ENCODE measurements at regions of chr10 and their contacts with region 1.

Region 1: GRCh38 chr10:75111367-75111906 is at the start of gene SAMD8:
- DNase-seq: peak in 1 of 2 donors; percentile 96
- H3K4me3 ChIP-seq: peak within 1 kb of the TSS; percentile 60 to 98
- H3K27ac ChIP-seq: peak within 1 kb of the TSS; percentile 99
- H3K4me1 ChIP-seq: peaks cover 47% of the 10 kb centered on the region
- H3K27me3 ChIP-seq: no peaks in the 10 kb centered on the region
- CTCF ChIP-seq: peak in 2 of 3 experiments; percentile 38 to 55
- POLR2A ChIP-seq: peak in 1 of 2 donors; percentile 92
- total RNA-seq, gene SAMD8: 42.7 TPM

Region 2: GRCh38 chr10:75127471-75127870 is 16.0 kb after region 1 on chr10:
- intact Hi-C with region 1: no loop called
- DNase-seq: no peak
- H3K4me3 ChIP-seq: no peak overlapping the region
- H3K27ac ChIP-seq: no peak overlapping the region
- H3K4me1 ChIP-seq: peaks cover 58% of the 10 kb centered on the region
- H3K27me3 ChIP-seq: no peaks in the 10 kb centered on the region
- CTCF ChIP-seq: no peak
- POLR2A ChIP-seq: no peak

Region 3: DNA sequence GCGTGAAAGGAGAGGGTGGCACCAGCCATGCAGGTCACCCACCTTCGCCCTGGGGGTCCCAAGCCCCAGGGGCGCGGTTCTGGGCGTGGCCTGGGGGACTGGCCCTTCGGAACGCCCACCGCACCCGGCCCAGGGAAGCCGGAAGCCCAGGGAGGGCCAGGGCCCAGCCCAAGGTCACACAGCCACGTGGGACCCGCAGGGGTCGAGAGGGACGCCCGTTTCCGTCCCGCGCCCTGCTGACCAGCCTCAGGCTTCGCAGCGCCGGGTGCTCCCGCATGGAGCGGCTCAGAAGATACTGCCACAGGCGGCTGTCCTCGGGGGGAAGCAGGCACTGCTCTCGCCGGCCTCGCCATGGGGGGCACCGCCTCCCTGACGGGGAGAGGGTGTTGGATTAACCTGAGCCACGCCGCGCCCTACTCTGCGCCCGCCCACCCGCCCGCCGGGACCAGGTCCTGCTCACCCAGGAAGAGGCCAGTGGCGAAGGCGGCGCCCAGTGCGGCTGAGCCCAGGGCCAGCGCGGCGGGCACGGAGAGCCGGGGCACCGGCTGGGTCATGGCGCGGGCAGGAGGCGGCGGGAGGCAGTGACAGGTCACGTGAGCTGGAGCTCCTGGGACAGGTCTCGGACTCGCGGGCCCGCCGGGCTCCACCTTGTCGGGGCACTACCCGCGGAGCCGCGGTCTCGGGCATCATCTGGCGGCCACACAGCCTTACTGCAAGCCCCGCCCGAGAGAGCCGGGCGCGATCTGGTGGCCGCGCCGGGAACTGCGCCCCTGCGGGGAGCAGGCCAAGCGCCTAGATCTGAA is 124.1 kb after region 1 on chr10 and contains the start of gene COMTD1:
- intact Hi-C with region 1: loop called (anchors 5 kb)
- DNase-seq: no peak
- H3K4me3 ChIP-seq: peak within 1 kb of the TSS; percentile 60 to 96
- H3K27ac ChIP-seq: peak within 1 kb of the TSS; percentile 94
- H3K4me1 ChIP-seq: peaks cover 15% of the 10 kb centered on the region
- H3K27me3 ChIP-seq: no peaks in the 10 kb centered on the region
- CTCF ChIP-seq: peak; percentile 100
- POLR2A ChIP-seq: no peak
- total RNA-seq, gene COMTD1: 80.0 TPM